ENCODE measurements at regions of chr11 and their contacts with region 1.

Region 1: GRCh38 chr11:24064309-24064903 is 432.4 kb upstream of the LUZP2 start:
- DNase-seq: no peak
- ATAC-seq: no peak
- H3K4me3 ChIP-seq: no peak overlapping the region
- H3K27ac ChIP-seq: no peak overlapping the region
- H3K4me1 ChIP-seq: no peaks in the 10 kb centered on the region
- H3K27me3 ChIP-seq: no peaks in the 10 kb centered on the region
- CTCF ChIP-seq: no peak
- EP300 ChIP-seq: no peak
- POLR2A ChIP-seq: no peak
- RAD21 ChIP-seq: no peak

Region 2: DNA sequence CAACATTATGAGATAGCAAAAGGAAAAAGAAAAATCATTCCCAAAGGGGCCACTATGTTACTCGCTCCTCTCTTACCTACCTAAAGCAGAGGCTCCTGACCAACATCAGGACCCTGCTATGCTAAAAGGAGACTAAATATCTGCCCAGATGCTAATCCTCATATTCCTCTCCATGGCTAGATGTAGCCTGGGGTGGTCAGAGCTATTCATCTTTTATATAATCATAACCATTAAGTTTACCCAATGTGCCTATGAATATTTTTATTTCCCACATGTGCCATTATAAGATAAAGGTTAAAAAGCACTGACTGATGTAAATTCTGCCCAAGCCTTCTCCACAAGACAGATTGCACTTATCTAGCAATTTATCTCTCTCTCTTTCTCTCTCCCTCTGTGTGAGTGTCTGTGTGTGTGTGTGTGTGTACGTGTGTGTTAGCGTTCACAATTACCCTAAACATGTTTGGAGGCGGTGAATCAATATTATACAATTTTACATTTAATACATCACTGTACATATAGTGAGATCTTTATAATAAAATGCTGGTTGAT is 1912.7 kb before region 1 on chr11:
- CTCF ChIA-PET with region 1: no interaction called
- POLR2A ChIA-PET with region 1: no interaction called
- in situ Hi-C with region 1: loop called (anchors 10 kb)
- intact Hi-C with region 1: no loop called
- DNase-seq: no peak
- ATAC-seq: no peak
- H3K4me3 ChIP-seq: no peak overlapping the region
- H3K27ac ChIP-seq: no peak overlapping the region
- H3K4me1 ChIP-seq: no peaks in the 10 kb centered on the region
- H3K27me3 ChIP-seq: no peaks in the 10 kb centered on the region
- CTCF ChIP-seq: no peak
- EP300 ChIP-seq: no peak
- POLR2A ChIP-seq: no peak
- RAD21 ChIP-seq: no peak

Region 3: DNA sequence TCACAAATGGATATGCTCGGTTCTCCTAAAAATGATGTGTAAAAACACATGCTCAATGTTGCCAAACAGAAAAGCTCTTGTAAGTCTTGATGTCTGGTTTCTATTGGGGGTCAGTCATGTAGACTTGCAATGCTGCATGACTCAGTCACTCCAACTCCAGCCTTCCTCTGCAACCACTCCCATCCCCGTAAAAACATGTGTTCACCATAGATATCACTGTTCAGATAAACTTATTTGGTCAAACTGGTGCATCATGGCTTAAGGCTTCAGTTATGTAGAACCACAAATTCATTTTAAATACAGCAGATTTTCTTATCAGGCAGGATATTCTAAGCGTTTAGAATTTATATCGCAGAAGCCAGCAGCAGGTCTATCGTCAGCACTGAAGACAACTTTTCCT is 134.1 kb after region 1 on chr11:
- CTCF ChIA-PET with region 1: no interaction called
- POLR2A ChIA-PET with region 1: no interaction called
- in situ Hi-C with region 1: no loop called
- intact Hi-C with region 1: no loop called
- DNase-seq: peak in 1 of 4 experiments; percentile 1
- ATAC-seq: no peak
- H3K4me3 ChIP-seq: no peak overlapping the region
- H3K27ac ChIP-seq: no peak overlapping the region
- H3K4me1 ChIP-seq: no peaks in the 10 kb centered on the region
- H3K27me3 ChIP-seq: no peaks in the 10 kb centered on the region
- CTCF ChIP-seq: no peak
- EP300 ChIP-seq: no peak
- POLR2A ChIP-seq: no peak
- RAD21 ChIP-seq: no peak